ENCODE measurements at regions of chr6 and their contacts with region 1.

Region 1: GRCh38 chr6:57316581-57317059 is 810 bp upstream of the PRIM2 start:
- DNase-seq: peak; percentile 90
- H3K4me3 Mint-ChIP-seq: peak overlapping the region; percentile 100
- H3K27ac Mint-ChIP-seq: peak overlapping the region; percentile 98
- H3K4me1 Mint-ChIP-seq: peaks cover 28% of the 10 kb centered on the region
- H3K27me3 Mint-ChIP-seq: peaks cover 3% of the 10 kb centered on the region

Region 2: DNA sequence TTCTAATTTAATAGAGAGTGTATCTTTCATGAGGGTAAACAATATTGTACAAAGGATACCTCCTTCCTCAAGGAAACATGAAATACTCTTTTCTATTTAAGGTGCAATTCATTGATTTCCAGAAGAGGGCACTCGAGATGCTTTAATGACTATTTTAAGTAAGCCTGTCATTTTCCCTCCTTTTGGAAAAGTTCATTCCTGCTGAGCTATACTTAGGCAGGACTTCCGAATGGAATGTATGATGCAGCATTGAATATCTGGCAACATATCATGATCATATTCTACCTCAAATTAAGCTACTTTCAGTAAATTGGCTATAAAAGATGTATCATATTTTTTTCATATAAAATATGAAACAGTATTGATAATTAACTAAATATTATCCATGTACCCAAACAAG is 679.0 kb before region 1 on chr6:
- CTCF ChIA-PET with region 1: no interaction called
- POLR2A ChIA-PET with region 1: no interaction called
- intact Hi-C with region 1: loop called (anchors 10 kb)
- DNase-seq: no peak
- H3K4me3 Mint-ChIP-seq: no peak overlapping the region
- H3K27ac Mint-ChIP-seq: no peak overlapping the region
- H3K4me1 Mint-ChIP-seq: no peaks in the 10 kb centered on the region
- H3K27me3 Mint-ChIP-seq: peaks cover 5% of the 10 kb centered on the region

Region 3: GRCh38 chr6:56764081-56764566 is 552.5 kb before region 1 on chr6:
- CTCF ChIA-PET with region 1: no interaction called
- POLR2A ChIA-PET with region 1: no interaction called
- intact Hi-C with region 1: no loop called
- DNase-seq: no peak
- H3K4me3 Mint-ChIP-seq: no peak overlapping the region
- H3K27ac Mint-ChIP-seq: no peak overlapping the region
- H3K4me1 Mint-ChIP-seq: no peaks in the 10 kb centered on the region
- H3K27me3 Mint-ChIP-seq: no peaks in the 10 kb centered on the region

Region 4: DNA sequence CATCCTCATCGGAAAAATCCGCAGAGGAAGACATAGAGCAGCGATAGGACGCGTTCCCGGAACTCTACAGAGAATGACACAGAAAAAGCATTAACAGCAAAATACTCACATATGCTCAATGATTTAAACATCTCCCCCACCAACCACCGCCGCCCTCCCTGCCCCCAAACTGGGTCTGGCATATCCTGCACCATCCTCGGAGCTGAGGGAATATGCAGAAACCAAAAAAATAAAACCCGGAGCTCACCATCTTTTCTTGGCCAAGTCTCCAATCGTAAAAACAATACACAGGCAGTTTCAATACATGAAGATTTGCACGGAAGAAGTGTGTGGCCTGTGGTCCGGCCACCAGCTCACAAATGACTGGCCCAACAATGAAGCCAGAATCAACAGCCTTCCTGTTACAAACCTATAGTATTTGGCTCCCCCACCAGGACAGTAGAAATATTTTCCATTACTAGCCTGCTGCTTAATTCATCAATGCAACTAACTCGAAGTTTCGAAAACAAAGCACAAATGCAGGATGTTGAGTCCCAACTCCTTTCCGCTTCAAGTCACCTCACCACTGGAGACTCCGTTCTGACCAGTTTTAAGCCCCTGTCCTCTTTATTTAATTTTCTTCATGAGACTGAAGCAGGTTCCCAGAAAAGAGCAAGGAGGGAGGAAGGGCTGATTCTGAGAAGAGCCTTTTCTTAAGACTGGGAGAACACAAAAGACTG is 464.9 kb before region 1 on chr6:
- CTCF ChIA-PET with region 1: no interaction called
- POLR2A ChIA-PET with region 1: no interaction called
- intact Hi-C with region 1: loop called (anchors 5 kb)
- DNase-seq: peak; percentile 68
- H3K4me3 Mint-ChIP-seq: peak overlapping the region; percentile 56
- H3K27ac Mint-ChIP-seq: no peak overlapping the region
- H3K4me1 Mint-ChIP-seq: peaks cover 17% of the 10 kb centered on the region
- H3K27me3 Mint-ChIP-seq: peaks cover 39% of the 10 kb centered on the region

Region 5: DNA sequence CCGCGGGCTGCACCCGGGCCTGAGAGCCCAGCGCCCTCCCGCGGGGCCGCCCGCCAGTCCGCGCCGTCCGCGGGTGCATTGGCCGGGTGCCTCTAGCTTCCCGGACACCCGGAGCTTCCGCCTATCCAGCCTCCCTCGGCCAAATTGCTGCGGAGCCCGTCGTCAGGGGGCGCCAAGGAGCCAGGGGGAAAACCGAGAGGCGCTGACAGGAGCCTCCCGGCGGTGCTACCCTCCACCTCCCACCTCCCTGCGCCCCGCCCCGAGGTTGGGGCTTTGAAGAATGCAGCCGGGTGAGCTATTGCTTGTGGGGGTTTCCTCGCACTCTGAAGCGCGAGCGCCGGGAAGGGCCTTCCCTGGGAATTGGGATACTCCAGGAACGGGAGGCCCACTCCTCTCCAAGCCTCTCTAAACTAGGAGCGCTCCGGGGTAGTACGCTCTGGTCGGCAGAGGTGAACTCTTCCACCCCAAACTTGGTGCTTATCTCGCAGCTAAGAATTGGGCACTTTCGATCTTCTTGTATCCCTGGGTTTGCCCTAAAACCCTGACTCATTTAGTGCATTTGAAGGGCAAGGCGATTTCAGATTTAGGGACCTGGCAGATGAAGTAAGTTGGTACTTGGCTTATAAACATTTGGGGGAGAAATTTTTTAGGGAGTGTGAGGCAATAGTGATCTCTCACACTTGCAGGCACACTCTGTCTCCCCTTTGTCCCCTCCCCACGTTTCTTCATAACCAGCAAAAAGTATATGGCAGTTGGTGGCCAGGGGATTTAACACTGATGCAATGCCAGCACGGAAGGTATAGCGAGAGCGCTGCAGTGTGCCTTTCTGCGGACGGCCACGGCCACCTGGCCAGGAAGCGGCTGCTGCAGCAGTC is 361.2 kb before region 1 on chr6:
- CTCF ChIA-PET with region 1: interaction called, 3 read pairs
- POLR2A ChIA-PET with region 1: no interaction called
- intact Hi-C with region 1: loop called (anchors 1 kb)
- DNase-seq: peak; percentile 81
- H3K4me3 Mint-ChIP-seq: peak overlapping the region; percentile 72
- H3K27ac Mint-ChIP-seq: no peak overlapping the region
- H3K4me1 Mint-ChIP-seq: peaks cover 21% of the 10 kb centered on the region
- H3K27me3 Mint-ChIP-seq: peaks cover 45% of the 10 kb centered on the region

Region 6: GRCh38 chr6:57089687-57090460 is 226.7 kb before region 1 on chr6 and contains the start of gene ZNF451:
- CTCF ChIA-PET with region 1: no interaction called
- POLR2A ChIA-PET with region 1: interaction called, 3 read pairs
- intact Hi-C with region 1: loop called (anchors 1 kb)
- DNase-seq: peak; percentile 99
- H3K4me3 Mint-ChIP-seq: peak within 1 kb of the TSS; percentile 85
- H3K27ac Mint-ChIP-seq: peak within 1 kb of the TSS; percentile 92
- H3K4me1 Mint-ChIP-seq: peaks cover 30% of the 10 kb centered on the region
- H3K27me3 Mint-ChIP-seq: no peaks in the 10 kb centered on the region
- total RNA-seq, gene ZNF451: 38.2 to 41.4 TPM

Region 7: GRCh38 chr6:57190140-57190539 is 126.5 kb before region 1 on chr6:
- CTCF ChIA-PET with region 1: interaction called, 10 read pairs
- POLR2A ChIA-PET with region 1: no interaction called
- intact Hi-C with region 1: no loop called
- DNase-seq: no peak
- H3K4me3 Mint-ChIP-seq: no peak overlapping the region
- H3K27ac Mint-ChIP-seq: no peak overlapping the region
- H3K4me1 Mint-ChIP-seq: no peaks in the 10 kb centered on the region
- H3K27me3 Mint-ChIP-seq: no peaks in the 10 kb centered on the region

Region 8: GRCh38 chr6:57267586-57268293 is 48.9 kb before region 1 on chr6:
- CTCF ChIA-PET with region 1: interaction called, 36 read pairs
- POLR2A ChIA-PET with region 1: no interaction called
- intact Hi-C with region 1: loop called (anchors 1 kb)
- DNase-seq: peak; percentile 50
- H3K4me3 Mint-ChIP-seq: no peak overlapping the region
- H3K27ac Mint-ChIP-seq: no peak overlapping the region
- H3K4me1 Mint-ChIP-seq: peaks cover 11% of the 10 kb centered on the region
- H3K27me3 Mint-ChIP-seq: peaks cover 12% of the 10 kb centered on the region

Measured in activated CD4-positive, alpha-beta memory T cell treated with anti-CD3 and anti-CD28 coated beads for 36 hours (primary cell).